ENCODE measurements at regions of chr16 and their contacts with region 1.

Region 1: DNA sequence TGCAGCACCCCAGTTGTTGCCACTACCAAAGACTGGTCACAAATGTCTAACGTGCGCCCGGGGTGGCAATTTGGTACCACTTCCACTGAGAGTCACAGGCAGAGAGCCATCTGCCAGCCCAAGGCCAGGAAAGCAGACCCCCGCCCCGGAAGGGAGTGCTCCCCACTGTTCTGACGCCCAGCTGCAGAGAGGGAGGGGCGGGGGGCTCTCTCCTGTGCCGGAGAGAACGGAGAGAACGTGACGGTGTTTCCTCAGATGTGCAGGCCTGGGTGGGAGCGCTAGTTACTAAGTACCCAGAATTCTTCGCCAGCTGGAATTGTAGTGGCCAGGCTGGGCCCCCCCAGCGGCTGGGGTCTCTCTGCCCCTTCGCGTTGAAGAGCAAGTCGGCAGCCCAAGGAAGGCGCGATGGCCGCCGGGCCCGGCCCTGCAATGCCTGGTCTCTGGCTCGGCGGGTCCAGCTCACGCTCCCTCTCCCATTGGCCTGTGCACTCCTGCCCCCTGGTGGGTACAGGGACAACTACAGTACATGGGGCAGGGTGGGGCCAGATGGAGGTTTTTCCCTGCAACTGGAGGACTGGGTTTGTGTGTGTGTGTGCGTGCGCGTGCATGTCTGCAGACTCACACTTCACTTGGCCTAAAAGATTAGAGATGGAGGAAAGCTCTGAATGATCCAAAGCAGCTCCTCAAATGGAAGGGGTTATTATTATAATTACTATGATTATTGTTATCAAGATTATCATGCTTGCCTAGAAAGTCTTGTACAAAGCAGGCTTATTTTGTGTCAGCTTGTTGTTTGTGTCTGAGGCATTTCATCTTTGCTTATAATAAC is 107.1 kb downstream of the AMFR start:
- DNase-seq: peak; percentile 93
- H3K4me3 ChIP-seq: peak overlapping the region in 3 of 8 donors; percentile 12 to 54 (median 27)
- H3K27ac ChIP-seq: peak overlapping the region in 1 of 8 donors; percentile 10
- H3K4me1 ChIP-seq: peaks cover 0 to 11% (median 7%) of the 10 kb centered on the region in 6 donors
- H3K27me3 ChIP-seq: peaks cover 0 to 7% (median 0%) of the 10 kb centered on the region in 7 donors
- CTCF ChIP-seq: peak; percentile 87 to 98 (median 95)
- POLR2A ChIP-seq: no peak

Region 2: DNA sequence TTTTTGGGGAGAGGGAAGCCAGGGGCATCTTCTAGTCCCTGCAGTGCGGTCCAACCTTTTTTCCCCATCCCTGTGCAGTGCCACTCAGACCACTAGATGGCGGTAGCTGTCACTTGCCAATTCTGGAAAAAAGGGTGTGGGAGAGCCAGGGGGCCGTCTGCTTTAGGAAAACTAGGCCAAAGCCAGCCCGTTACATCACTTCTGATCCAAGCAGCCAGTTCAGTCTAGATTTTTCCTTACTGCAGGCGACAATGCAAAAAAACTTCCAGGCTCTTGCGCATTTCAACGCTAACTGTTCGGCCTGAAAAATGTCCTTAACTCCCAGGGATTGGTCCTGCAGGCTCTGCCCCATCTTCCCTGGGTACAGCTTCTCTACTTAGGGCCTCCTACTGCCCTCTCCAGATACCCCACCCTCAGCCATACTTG is 373.8 kb before region 1 on chr16:
- intact Hi-C with region 1: loop called (anchors 2 kb)
- DNase-seq: no peak
- H3K4me3 ChIP-seq: no peak overlapping the region
- H3K27ac ChIP-seq: no peak overlapping the region
- H3K4me1 ChIP-seq: no peaks in the 10 kb centered on the region
- H3K27me3 ChIP-seq: peaks cover 0 to 30% (median 0%) of the 10 kb centered on the region in 7 donors
- CTCF ChIP-seq: peak; percentile 57 to 90 (median 83)
- POLR2A ChIP-seq: no peak

Region 3: GRCh38 chr16:56041686-56042085 is 276.5 kb before region 1 on chr16:
- intact Hi-C with region 1: loop called (anchors 5 kb)
- DNase-seq: no peak
- H3K4me3 ChIP-seq: no peak overlapping the region
- H3K27ac ChIP-seq: no peak overlapping the region
- H3K4me1 ChIP-seq: no peaks in the 10 kb centered on the region
- H3K27me3 ChIP-seq: no peaks in the 10 kb centered on the region
- CTCF ChIP-seq: peak in 9 of 11 experiments; percentile 8 to 48 (median 29)
- POLR2A ChIP-seq: no peak

Region 4: DNA sequence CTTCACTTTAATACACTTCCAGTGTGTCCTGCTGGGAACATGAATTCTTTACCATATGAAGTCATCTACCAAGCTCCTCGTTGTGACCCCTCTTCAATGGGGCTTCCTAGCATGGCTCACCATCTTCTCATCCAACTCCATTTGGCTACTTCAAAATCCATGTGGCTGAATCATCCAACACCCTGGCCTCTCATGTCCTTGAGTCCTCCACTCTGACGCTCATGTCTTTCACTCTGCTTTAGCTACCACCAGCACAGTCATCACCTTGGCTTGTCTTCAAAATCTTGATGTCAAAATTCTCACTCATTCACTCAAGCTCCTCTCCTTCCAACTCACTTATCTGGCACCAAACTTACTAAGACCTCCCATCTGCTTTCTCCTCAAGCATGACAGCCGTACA is 71.3 kb after region 1 on chr16:
- intact Hi-C with region 1: no loop called
- DNase-seq: no peak
- H3K4me3 ChIP-seq: no peak overlapping the region
- H3K27ac ChIP-seq: no peak overlapping the region
- H3K4me1 ChIP-seq: no peaks in the 10 kb centered on the region
- H3K27me3 ChIP-seq: no peaks in the 10 kb centered on the region
- CTCF ChIP-seq: no peak
- POLR2A ChIP-seq: no peak

Region 5: DNA sequence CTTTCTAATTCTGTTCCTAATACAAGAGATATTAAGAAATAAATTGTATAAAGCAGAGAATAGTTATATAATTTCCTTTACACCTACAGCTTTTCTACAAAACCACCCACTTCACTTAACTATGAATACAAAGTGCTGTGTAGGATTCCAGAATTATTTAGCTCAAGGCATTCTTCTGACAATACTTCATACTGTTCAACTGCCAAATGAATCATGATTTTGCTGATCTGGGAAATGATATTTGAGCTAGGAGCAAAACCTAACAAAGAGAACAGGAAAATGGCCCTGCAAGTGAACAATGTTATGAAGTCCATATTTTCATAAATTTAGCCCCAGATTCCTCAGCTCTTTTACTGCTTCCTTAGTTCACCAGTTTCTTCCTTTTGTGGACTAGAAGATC is 188.7 kb after region 1 on chr16:
- intact Hi-C with region 1: no loop called
- DNase-seq: no peak
- H3K4me3 ChIP-seq: no peak overlapping the region
- H3K27ac ChIP-seq: no peak overlapping the region
- H3K4me1 ChIP-seq: no peaks in the 10 kb centered on the region
- H3K27me3 ChIP-seq: no peaks in the 10 kb centered on the region
- CTCF ChIP-seq: no peak
- POLR2A ChIP-seq: no peak